OCI-LY7 (cell line): ENCODE measurements at regions of chr17 and their contacts with region 1.

Region 1: DNA sequence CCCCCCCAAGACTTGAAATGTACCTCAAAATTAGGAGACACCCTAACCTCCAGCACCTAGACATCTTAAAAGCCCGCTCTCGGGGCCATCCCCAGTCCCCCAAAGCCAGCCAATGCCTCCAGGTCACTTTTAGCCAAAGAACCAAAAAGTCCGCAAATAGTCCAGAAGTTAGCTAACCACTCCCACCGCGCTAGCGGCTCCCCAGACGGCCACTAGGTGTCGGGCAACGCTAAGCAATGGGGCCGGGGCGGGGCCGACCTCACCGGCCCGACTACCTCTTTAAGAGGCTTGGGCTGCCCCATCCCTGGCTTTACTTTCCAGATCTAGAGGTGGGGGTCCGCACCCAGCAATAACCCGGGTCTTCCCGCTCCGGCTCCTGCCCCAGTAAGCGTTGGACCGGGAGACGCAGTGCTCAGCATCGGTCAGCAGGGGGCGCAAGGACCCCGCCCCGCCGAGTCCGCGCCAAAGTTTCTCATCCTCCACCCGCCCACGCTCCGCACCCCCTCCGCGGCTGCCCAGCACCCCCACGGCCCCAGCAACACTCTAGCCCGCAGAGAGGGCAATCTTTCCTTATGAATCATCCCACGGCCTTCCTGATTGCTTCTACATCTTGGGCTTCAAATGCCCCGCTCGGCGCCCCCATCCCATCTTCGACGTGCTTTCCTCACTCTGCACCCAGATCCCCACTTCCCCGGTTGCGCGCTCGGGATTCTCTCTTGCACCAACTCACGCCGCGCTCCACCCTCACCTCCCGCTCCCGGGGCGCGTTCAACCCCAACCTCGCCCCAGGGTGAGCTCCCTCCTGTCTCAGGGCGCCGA is 765 bp downstream of the COL1A1 start:
- DNase-seq: peak; percentile 85
- H3K4me3 ChIP-seq: peak overlapping the region; percentile 55
- H3K27ac ChIP-seq: no peak overlapping the region
- H3K4me1 ChIP-seq: peaks cover 8% of the 10 kb centered on the region
- CTCF ChIP-seq: peak; percentile 100

Region 2: DNA sequence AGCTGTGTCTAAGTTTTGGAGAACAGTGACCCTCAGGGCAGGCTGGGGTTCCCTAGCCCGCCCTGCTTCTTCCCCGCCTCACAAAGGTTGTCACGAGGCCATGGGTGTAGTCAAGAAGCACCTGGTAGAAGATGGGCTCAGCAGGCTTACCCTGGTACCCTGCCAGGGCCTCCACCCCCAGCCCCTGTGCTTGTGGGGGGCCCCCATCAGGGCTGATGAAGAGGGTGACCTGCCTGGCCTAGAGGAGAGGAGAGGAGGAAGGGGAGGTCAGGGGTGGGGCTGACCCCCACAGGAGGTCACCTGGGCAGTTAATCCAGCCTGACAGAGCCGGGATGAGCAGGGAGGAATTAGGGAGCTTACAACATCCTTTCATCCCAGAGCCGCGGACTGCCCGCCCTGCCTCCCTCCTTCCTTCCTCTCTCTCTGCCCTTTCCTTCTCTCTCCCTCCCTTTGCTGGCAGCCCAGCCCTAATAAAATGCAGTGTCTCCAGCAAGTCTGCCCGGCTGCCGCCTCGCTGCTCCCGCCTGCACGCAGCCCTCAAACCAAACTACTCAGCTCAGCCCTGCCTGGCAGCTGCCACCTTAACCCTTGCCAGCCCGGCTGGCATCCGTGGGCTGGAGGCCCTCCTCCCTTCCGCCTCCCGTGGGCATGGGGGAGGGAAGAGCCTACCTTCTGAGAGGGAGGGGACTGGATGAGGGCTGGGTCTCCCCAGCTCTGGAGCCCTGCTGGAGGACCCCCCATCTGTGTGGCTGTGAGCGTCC is 212.8 kb before region 1 on chr17:
- CTCF ChIA-PET with region 1: no interaction called
- POLR2A ChIA-PET with region 1: no interaction called
- intact Hi-C with region 1: no loop called
- DNase-seq: no peak
- H3K4me3 ChIP-seq: no peak overlapping the region
- H3K27ac ChIP-seq: no peak overlapping the region
- H3K4me1 ChIP-seq: no peaks in the 10 kb centered on the region
- CTCF ChIP-seq: no peak

Region 3: GRCh38 chr17:50153650-50154575 is 46.8 kb before region 1 on chr17:
- CTCF ChIA-PET with region 1: no interaction called
- POLR2A ChIA-PET with region 1: no interaction called
- intact Hi-C with region 1: no loop called
- DNase-seq: no peak
- H3K4me3 ChIP-seq: no peak overlapping the region
- H3K27ac ChIP-seq: peak overlapping the region; percentile 2
- H3K4me1 ChIP-seq: peaks cover 30% of the 10 kb centered on the region
- CTCF ChIP-seq: no peak

Region 4: GRCh38 chr17:50169121-50169764 is 31.4 kb before region 1 on chr17:
- CTCF ChIA-PET with region 1: interaction called, 9 read pairs
- POLR2A ChIA-PET with region 1: interaction called, 7 read pairs
- intact Hi-C with region 1: loop called (anchors 1 kb)
- DNase-seq: peak; percentile 84
- H3K4me3 ChIP-seq: peak overlapping the region; percentile 64
- H3K27ac ChIP-seq: no peak overlapping the region
- H3K4me1 ChIP-seq: peaks cover 17% of the 10 kb centered on the region
- CTCF ChIP-seq: peak; percentile 92

Region 5: GRCh38 chr17:50176559-50177357 is 23.9 kb before region 1 on chr17:
- CTCF ChIA-PET with region 1: interaction called, 10 read pairs
- POLR2A ChIA-PET with region 1: no interaction called
- intact Hi-C with region 1: no loop called
- DNase-seq: no peak
- H3K4me3 ChIP-seq: no peak overlapping the region
- H3K27ac ChIP-seq: no peak overlapping the region
- H3K4me1 ChIP-seq: peaks cover 12% of the 10 kb centered on the region
- CTCF ChIP-seq: no peak

Region 6: DNA sequence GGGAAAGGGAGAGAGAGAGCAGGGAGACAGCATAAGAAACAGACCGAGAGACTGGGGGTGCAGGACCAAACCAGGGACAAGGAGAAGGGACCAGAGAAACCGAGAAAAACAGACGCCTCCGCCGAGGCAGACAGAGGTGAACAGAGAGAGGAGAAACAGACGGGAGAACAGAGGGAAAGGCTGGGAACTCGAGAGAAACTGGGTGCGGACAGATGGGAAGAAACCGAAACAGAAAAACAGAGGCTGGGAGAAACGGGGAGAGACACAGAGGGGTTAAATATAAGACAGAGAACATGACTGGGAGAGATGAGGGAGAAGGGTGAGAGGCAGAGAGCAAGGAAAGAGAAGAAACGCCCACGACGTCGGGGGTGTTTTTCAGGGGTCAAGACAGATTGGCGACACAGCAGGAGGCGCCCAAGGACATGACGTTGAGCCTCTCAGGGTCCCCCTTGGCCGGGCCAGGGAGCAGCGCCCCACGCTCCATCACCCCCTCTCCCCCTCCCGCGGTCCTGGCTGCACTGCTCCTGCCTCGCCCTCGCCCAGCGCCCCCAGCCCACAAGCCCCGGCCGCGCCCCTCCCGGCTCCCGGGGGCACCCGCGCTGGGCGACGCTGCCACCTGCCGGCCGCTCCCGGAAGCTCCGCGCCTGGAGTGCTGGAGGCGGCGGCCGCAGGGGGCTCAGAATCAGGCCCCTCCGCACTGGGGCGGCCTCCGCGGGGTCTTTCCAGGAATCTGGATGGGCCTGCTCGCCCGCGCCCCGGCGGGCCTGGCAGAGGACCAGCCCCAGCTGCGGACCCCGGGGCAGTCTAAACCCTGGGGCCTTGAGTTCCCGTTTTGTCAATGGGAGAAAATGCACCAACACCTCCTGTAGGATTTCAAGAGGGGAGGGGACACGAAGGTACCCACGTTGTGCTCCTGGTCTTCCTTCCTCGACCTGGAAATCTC is 72.3 kb after region 1 on chr17:
- CTCF ChIA-PET with region 1: interaction called, 12 read pairs
- POLR2A ChIA-PET with region 1: no interaction called
- intact Hi-C with region 1: loop called (anchors 1 kb)
- DNase-seq: peak; percentile 48
- H3K4me3 ChIP-seq: peak overlapping the region; percentile 41
- H3K27ac ChIP-seq: no peak overlapping the region
- H3K4me1 ChIP-seq: no peaks in the 10 kb centered on the region
- CTCF ChIP-seq: peak; percentile 90